ENCODE measurements at regions of chr6 and their contacts with region 1.

Region 1: DNA sequence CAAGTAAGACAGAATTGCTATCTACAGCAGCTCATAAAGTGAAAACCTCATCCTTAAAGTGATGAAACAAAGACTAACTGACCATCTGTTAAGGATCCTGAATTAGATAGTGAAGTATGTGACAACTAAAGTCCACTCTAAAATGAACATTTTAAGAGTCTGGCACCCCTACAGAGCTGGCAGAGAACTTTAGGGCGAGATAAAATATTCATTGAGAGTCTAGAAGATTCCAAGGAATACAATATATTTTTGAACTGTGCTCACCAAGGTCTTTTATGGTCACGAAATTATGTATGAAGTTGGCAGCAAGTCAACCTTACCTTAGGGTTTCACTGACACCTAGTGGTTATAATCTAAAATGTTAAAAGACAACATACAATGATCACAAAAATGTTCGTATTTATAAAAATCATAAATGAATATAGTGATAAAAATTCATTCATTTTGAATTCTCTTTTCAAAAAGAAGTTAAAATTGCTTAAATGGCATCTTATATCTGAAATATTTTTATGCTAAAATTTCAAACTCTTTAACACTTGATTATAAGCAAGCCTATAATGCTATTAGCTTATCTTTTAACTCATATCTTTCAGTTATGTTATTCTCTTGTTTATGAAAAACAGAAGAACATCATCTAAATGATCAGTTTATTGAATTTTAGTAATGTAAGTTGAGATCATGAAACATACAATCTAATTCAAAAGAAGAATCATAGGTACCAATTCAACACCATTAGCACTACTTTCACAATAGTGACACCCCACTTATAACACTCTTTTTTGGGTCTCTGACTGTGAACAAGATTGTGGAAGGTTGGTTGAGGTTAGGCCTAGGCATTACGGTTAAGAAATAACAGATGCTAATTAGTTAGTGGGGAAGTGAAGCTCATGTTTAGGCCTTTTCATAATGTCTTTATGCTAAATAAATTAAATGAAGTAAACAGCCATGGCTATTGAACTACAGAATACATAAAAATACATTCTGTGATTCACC is 27.5 kb downstream of the RSPH3 start:
- DNase-seq: no peak
- H3K4me3 Mint-ChIP-seq: no peak overlapping the region
- H3K27ac Mint-ChIP-seq: no peak overlapping the region
- H3K4me1 Mint-ChIP-seq: no peaks in the 10 kb centered on the region
- H3K27me3 Mint-ChIP-seq: peaks cover 3% of the 10 kb centered on the region

Region 2: GRCh38 chr6:158213925-158214674 is 758.4 kb before region 1 on chr6:
- intact Hi-C with region 1: loop called (anchors 5 kb)
- DNase-seq: peak; percentile 51
- H3K4me3 Mint-ChIP-seq: no peak overlapping the region
- H3K27ac Mint-ChIP-seq: no peak overlapping the region
- H3K4me1 Mint-ChIP-seq: peaks cover 25% of the 10 kb centered on the region
- H3K27me3 Mint-ChIP-seq: no peaks in the 10 kb centered on the region

Region 3: DNA sequence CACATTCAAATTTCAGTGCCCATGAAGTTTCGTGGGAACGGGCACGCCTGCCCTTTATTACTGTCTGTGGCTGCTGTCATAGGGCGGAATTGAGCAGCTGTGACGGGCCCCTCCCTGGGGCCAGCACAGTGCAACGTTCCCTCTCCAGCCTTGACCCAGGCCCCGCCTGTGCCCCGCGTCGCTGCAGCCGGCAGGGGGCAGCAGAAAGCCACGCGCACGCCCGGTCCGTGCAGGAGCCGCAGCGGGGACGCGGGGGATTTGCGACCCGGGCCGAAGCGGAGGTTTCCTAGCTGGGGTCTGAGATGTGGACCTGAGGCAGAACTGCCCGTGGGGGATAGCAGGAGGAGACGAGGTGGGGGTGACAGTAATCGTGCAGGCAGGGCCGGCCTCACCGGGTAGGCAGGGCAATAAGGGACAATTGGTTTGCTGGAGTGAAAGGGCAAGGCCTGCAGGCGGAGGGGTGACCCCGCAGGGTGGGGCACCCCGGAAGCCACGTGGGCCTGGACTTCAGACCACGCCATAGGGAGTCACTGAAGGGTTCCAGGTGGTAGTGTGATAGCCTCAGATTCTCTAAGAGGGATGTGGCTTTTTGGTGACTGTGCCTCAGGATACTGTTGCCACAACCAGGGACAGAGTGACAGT is 268.2 kb before region 1 on chr6:
- intact Hi-C with region 1: loop called (anchors 1 kb)
- DNase-seq: peak; percentile 72
- H3K4me3 Mint-ChIP-seq: peak overlapping the region; percentile 66
- H3K27ac Mint-ChIP-seq: peak overlapping the region; percentile 67
- H3K4me1 Mint-ChIP-seq: peaks cover 20% of the 10 kb centered on the region
- H3K27me3 Mint-ChIP-seq: no peaks in the 10 kb centered on the region

Region 4: GRCh38 chr6:158718461-158719046 is 254.0 kb before region 1 on chr6:
- intact Hi-C with region 1: loop called (anchors 1 kb)
- DNase-seq: no peak
- H3K4me3 Mint-ChIP-seq: no peak overlapping the region
- H3K27ac Mint-ChIP-seq: no peak overlapping the region
- H3K4me1 Mint-ChIP-seq: peaks cover 69% of the 10 kb centered on the region
- H3K27me3 Mint-ChIP-seq: peaks cover 2% of the 10 kb centered on the region

Region 5: GRCh38 chr6:158772851-158773371 is 199.6 kb before region 1 on chr6:
- intact Hi-C with region 1: loop called (anchors 2 kb)
- DNase-seq: no peak
- H3K4me3 Mint-ChIP-seq: no peak overlapping the region
- H3K27ac Mint-ChIP-seq: peak overlapping the region; percentile 29
- H3K4me1 Mint-ChIP-seq: peaks cover 67% of the 10 kb centered on the region
- H3K27me3 Mint-ChIP-seq: no peaks in the 10 kb centered on the region

Region 6: DNA sequence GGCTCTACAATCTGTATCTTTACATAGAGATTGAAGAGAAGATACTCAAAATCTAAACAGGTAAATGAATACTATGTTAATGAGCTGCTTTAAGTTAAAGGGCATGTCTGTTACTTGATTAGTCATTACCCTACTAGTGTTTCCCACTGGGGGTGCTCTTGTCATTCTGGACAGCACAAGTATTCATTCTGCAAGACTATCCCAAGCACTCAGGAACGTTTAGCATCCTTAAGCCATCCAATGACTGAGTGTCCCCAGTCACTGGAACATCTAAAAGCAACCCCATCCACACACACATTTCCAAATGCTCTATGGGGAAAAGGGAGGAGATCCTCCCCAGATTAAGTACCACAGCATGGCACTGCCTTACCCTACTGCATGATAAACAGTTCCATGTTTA is 179.1 kb before region 1 on chr6:
- intact Hi-C with region 1: loop called (anchors 1 kb)
- DNase-seq: no peak
- H3K4me3 Mint-ChIP-seq: no peak overlapping the region
- H3K27ac Mint-ChIP-seq: peak overlapping the region; percentile 4
- H3K4me1 Mint-ChIP-seq: peaks cover 73% of the 10 kb centered on the region
- H3K27me3 Mint-ChIP-seq: no peaks in the 10 kb centered on the region

Region 7: GRCh38 chr6:159098636-159099106 is 126.1 kb after region 1 on chr6:
- intact Hi-C with region 1: no loop called
- DNase-seq: peak; percentile 67
- H3K4me3 Mint-ChIP-seq: peak overlapping the region; percentile 76
- H3K27ac Mint-ChIP-seq: peak overlapping the region; percentile 96
- H3K4me1 Mint-ChIP-seq: peaks cover 88% of the 10 kb centered on the region
- H3K27me3 Mint-ChIP-seq: no peaks in the 10 kb centered on the region

Region 8: DNA sequence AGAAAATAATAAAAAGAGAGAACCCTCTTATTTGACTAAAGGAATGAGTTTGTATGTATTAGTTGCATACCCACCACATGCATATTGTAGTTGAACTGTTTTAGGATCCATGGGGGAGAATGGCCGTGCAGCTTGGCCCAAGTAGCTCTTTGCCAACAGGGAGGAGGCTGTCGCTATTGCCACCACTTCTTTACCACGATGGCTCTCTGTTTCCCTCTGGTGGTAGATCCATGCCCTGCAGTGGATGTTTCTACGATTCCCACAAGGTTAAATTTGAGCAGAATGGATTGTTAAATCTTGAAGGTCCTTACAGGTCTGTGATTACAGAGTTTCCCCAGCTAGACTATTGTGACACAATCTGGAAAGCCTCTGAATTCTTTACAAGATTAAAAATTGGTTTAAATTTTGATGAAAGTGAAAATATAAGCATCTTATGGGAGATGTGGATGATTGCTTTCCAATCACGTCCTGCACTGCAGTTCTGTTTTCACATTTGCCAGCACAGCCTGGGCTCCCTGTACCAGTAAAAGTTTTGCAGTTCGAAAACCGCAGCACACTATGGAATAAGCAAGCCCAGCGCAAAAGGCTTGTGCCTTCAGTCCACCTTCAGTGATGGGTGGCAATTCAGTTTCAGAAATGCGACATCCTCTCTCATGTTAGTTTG is 162.3 kb after region 1 on chr6:
- intact Hi-C with region 1: loop called (anchors 1 kb)
- DNase-seq: peak; percentile 67
- H3K4me3 Mint-ChIP-seq: no peak overlapping the region
- H3K27ac Mint-ChIP-seq: no peak overlapping the region
- H3K4me1 Mint-ChIP-seq: peaks cover 10% of the 10 kb centered on the region
- H3K27me3 Mint-ChIP-seq: peaks cover 10% of the 10 kb centered on the region

Region 9: GRCh38 chr6:159654483-159655098 is 682.1 kb after region 1 on chr6:
- intact Hi-C with region 1: no loop called
- DNase-seq: no peak
- H3K4me3 Mint-ChIP-seq: no peak overlapping the region
- H3K27ac Mint-ChIP-seq: no peak overlapping the region
- H3K4me1 Mint-ChIP-seq: no peaks in the 10 kb centered on the region
- H3K27me3 Mint-ChIP-seq: no peaks in the 10 kb centered on the region

Measured in activated T-helper 1 cell treated with anti-CD3 and anti-CD28 coated beads, Interleukin-12 subunit alpha, Interleukin-12 subunit beta, Interleukin-2, Interleukin-4 antibody, amounts not matched to agents 30 ng/mL and 10 ng/mL and 1 ng/mL, durations not matched to agents 14 hours and 24 hours and 36 hours (primary cell).